CD14-positive monocyte (primary cell): ENCODE measurements at regions of chr7 and their contacts with region 1.

Region 1: DNA sequence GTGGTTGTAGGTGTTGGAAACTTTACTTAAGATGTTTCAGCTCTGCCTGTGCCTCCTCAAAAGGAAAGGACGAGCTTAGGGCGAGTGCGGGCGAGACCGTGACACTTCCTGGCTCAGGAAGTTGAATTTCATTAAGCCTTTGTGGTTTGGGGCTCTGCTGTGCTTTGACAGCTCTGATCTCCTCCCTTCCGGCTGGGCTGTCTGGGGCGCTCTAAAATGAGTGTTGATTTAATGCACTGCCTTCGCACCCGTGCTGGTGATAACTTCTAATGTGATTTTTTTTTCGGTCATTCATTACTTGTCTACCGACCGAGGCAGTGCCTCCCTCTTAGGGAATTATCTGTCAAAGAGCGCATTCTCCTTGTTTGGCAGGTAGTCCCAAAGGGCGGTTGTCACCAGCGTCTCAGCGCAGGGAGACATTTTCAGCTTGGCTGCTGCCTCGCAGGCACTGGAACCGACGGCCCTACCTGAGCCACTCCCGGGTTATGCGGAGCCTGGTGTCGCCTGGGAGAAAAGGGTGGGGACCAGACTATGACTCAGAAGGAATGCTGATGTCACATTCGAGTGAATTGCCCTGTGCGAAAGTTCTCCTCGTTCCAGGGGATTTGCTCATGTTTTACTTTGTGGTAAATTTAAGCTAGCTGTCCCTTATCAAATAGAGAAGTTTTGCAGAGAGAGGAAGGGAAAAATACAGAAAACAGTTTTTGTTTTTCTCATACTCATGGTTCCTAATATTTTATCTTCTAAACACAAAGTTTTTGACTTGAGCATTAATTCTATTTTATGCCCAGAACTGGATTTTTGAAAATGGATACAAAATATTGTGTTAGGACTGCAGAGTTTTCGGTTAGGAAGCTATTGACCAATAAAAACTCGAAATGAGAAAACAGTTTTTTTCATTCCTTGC is 920 bp downstream of the TES start:
- DNase-seq: peak; percentile 86 to 95 (median 92)
- H3K4me3 ChIP-seq: peak overlapping the region; percentile 56 to 92 (median 83)
- H3K4me3 Mint-ChIP-seq: peak overlapping the region; percentile 91 to 92
- H3K27ac ChIP-seq: peak overlapping the region; percentile 96
- H3K27ac Mint-ChIP-seq: peak overlapping the region; percentile 97 to 100 (median 98)
- H3K4me1 ChIP-seq: peaks cover 42 to 53% of the 10 kb centered on the region in 2 donors
- H3K4me1 Mint-ChIP-seq: peaks cover 48% of the 10 kb centered on the region
- H3K27me3 ChIP-seq: no peaks in the 10 kb centered on the region
- H3K27me3 Mint-ChIP-seq: peaks cover 1 to 2% (median 2%) of the 10 kb centered on the region in 3 donors
- CTCF ChIP-seq: no peak

Region 2: GRCh38 chr7:116024826-116025809 is 186.1 kb before region 1 on chr7:
- intact Hi-C with region 1: loop called in 1 of 2 experiments (anchors 10 kb)
- DNase-seq: peak; percentile 76 to 96 (median 92)
- H3K4me3 ChIP-seq: peak overlapping the region; percentile 3 to 94 (median 19)
- H3K4me3 Mint-ChIP-seq: peak overlapping the region in 1 of 2 donors; percentile 75
- H3K27ac ChIP-seq: peak overlapping the region; percentile 65 to 88
- H3K27ac Mint-ChIP-seq: peak overlapping the region; percentile 92 to 97 (median 93)
- H3K4me1 ChIP-seq: peaks cover 56 to 76% of the 10 kb centered on the region in 2 donors
- H3K4me1 Mint-ChIP-seq: peaks cover 73% of the 10 kb centered on the region
- H3K27me3 ChIP-seq: no peaks in the 10 kb centered on the region
- H3K27me3 Mint-ChIP-seq: no peaks in the 10 kb centered on the region
- CTCF ChIP-seq: no peak